GM12878 (cell line): ENCODE measurements at regions of chr9 and their contacts with region 1.

Region 1: GRCh38 chr9:92140074-92140753 is 25.0 kb upstream of the SPTLC1 start:
- DNase-seq: no peak
- ATAC-seq: peak; percentile 84
- H3K4me3 ChIP-seq: no peak overlapping the region
- H3K27ac ChIP-seq: no peak overlapping the region
- H3K4me1 ChIP-seq: no peaks in the 10 kb centered on the region; the same call in 1 of the 2 replicates
- H3K27me3 ChIP-seq: peaks cover 0 to 4% of the 10 kb centered on the region in 2 experiments; a peak in 3 of 4 replicates
- CTCF ChIP-seq: peak; percentile 92 to 98 (median 94)
- EP300 ChIP-seq: no peak
- POLR2A ChIP-seq: no peak
- RAD21 ChIP-seq: peak; percentile 82

Region 2: DNA sequence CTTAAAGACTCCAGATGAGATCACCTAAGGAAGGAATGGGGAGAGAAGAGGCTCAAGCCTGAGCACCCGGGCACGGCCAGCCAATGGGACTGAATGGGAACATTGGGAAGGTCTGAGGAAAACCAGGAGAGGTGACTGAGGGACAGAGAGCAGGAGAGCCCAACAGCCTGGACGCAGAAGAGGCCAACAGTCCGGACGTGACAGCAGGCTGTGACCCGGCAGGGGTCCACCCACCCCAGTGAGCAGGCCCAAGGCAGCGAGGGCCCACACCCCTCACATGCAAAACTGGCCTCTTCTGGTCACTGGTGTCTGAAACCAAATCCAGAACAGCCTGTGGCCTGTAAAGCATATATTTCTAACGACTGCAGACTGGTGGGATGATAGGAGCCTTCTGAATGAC is 17.4 kb before region 1 on chr9:
- CTCF ChIA-PET with region 1: interaction called, 28 read pairs
- POLR2A ChIA-PET with region 1: no interaction called
- RAD21 ChIA-PET with region 1: no interaction called
- SMC1A ChIA-PET with region 1: no interaction called
- in situ Hi-C with region 1: no loop called
- intact Hi-C with region 1: no loop called
- DNase-seq: no peak
- ATAC-seq: no peak
- H3K4me3 ChIP-seq: no peak overlapping the region
- H3K27ac ChIP-seq: no peak overlapping the region
- H3K4me1 ChIP-seq: no peaks in the 10 kb centered on the region
- H3K27me3 ChIP-seq: no peaks in the 10 kb centered on the region
- CTCF ChIP-seq: no peak
- EP300 ChIP-seq: no peak
- POLR2A ChIP-seq: no peak
- RAD21 ChIP-seq: no peak

Region 3: DNA sequence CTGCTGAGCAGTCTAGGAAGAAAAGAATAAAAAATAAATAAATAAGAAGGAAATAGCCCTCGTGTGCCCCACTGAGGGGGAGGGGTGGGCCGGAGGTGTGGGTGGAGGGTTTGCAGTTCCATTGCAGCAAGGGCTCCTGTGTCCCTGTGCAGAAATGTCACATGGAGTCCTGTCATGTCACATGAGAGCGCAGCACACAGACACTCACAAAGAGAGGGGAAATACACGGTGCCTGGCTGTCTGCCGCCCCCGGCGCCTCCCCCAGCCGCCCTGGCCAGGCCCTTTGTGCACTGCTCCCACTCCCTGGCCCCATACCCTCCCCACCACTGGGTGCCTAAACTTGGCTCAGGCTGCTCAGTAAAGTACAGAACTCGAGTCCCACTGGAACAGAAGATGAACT is 30.6 kb after region 1 on chr9:
- CTCF ChIA-PET with region 1: interaction called, 15 read pairs
- POLR2A ChIA-PET with region 1: no interaction called
- RAD21 ChIA-PET with region 1: interaction called, 3 read pairs
- SMC1A ChIA-PET with region 1: interaction called, 7 read pairs
- in situ Hi-C with region 1: no loop called
- intact Hi-C with region 1: no loop called
- DNase-seq: no peak
- ATAC-seq: no peak
- H3K4me3 ChIP-seq: no peak overlapping the region
- H3K27ac ChIP-seq: no peak overlapping the region
- H3K4me1 ChIP-seq: peaks cover 8% of the 10 kb centered on the region; the same call in 1 of the 2 replicates
- H3K27me3 ChIP-seq: no peaks in the 10 kb centered on the region
- CTCF ChIP-seq: no peak
- EP300 ChIP-seq: no peak
- POLR2A ChIP-seq: no peak
- RAD21 ChIP-seq: no peak

Region 4: GRCh38 chr9:92223758-92224157 is 83.5 kb after region 1 on chr9:
- CTCF ChIA-PET with region 1: interaction called, 17 read pairs
- POLR2A ChIA-PET with region 1: no interaction called
- RAD21 ChIA-PET with region 1: interaction called, 12 read pairs
- SMC1A ChIA-PET with region 1: interaction called, 4 read pairs
- in situ Hi-C with region 1: no loop called
- intact Hi-C with region 1: no loop called
- DNase-seq: no peak
- ATAC-seq: no peak
- H3K4me3 ChIP-seq: no peak overlapping the region
- H3K27ac ChIP-seq: no peak overlapping the region
- H3K4me1 ChIP-seq: no peaks in the 10 kb centered on the region
- H3K27me3 ChIP-seq: no peaks in the 10 kb centered on the region
- CTCF ChIP-seq: no peak
- EP300 ChIP-seq: no peak
- POLR2A ChIP-seq: no peak; the same call in 1 of the 2 replicates
- RAD21 ChIP-seq: no peak

Region 5: DNA sequence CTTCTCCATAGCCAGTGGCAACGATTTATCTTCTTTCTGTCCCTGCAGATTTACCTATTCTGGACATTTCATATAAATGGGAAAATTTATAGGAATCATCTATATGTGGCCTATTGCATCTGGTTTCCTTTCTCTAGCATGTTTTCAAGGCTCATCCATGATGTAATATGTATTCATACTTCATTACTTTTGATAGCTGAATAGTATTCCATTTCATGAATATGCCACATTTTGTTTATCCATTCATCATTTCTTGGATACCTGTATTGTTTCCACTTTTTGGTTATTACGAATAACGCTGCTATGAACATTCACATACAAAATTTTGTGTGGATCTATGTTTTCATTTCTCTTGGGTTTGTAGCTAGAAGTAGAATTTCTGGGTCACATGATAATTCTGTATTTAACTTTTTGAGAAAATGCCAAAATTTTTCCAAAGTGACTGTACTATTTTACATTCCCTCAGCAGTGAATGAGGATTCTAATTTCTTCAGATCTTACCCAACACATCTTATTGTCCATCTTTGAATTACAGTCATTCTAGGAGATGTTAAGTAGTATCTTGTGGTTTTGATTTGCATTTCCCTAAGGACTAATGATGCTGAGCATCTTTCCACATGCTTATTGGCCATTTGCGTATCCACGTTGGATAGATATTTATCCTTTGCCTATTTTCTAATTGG is 149.6 kb after region 1 on chr9:
- CTCF ChIA-PET with region 1: interaction called, 16 read pairs
- POLR2A ChIA-PET with region 1: no interaction called
- RAD21 ChIA-PET with region 1: interaction called, 9 read pairs
- SMC1A ChIA-PET with region 1: no interaction called
- in situ Hi-C with region 1: no loop called
- intact Hi-C with region 1: no loop called
- DNase-seq: no peak
- ATAC-seq: no peak
- H3K4me3 ChIP-seq: no peak overlapping the region
- H3K27ac ChIP-seq: no peak overlapping the region
- H3K4me1 ChIP-seq: peaks cover 10% of the 10 kb centered on the region
- H3K27me3 ChIP-seq: no peaks in the 10 kb centered on the region
- CTCF ChIP-seq: no peak
- EP300 ChIP-seq: no peak
- POLR2A ChIP-seq: no peak
- RAD21 ChIP-seq: no peak

Region 6: GRCh38 chr9:92455217-92455616 is 315.0 kb after region 1 on chr9:
- CTCF ChIA-PET with region 1: interaction called, 11 read pairs
- POLR2A ChIA-PET with region 1: no interaction called
- RAD21 ChIA-PET with region 1: no interaction called
- SMC1A ChIA-PET with region 1: no interaction called
- in situ Hi-C with region 1: no loop called
- intact Hi-C with region 1: no loop called
- DNase-seq: no peak
- ATAC-seq: peak; percentile 65
- H3K4me3 ChIP-seq: no peak overlapping the region
- H3K27ac ChIP-seq: no peak overlapping the region
- H3K4me1 ChIP-seq: no peaks in the 10 kb centered on the region
- H3K27me3 ChIP-seq: no peaks in the 10 kb centered on the region
- CTCF ChIP-seq: peak; percentile 31 to 50 (median 42); a peak in 5 of 6 replicates
- EP300 ChIP-seq: no peak
- POLR2A ChIP-seq: no peak
- RAD21 ChIP-seq: peak; percentile 44